Heart left ventricle (tissue), 16 donors: ENCODE measurements at regions of chr22 and their contacts with region 1.

Region 1: DNA sequence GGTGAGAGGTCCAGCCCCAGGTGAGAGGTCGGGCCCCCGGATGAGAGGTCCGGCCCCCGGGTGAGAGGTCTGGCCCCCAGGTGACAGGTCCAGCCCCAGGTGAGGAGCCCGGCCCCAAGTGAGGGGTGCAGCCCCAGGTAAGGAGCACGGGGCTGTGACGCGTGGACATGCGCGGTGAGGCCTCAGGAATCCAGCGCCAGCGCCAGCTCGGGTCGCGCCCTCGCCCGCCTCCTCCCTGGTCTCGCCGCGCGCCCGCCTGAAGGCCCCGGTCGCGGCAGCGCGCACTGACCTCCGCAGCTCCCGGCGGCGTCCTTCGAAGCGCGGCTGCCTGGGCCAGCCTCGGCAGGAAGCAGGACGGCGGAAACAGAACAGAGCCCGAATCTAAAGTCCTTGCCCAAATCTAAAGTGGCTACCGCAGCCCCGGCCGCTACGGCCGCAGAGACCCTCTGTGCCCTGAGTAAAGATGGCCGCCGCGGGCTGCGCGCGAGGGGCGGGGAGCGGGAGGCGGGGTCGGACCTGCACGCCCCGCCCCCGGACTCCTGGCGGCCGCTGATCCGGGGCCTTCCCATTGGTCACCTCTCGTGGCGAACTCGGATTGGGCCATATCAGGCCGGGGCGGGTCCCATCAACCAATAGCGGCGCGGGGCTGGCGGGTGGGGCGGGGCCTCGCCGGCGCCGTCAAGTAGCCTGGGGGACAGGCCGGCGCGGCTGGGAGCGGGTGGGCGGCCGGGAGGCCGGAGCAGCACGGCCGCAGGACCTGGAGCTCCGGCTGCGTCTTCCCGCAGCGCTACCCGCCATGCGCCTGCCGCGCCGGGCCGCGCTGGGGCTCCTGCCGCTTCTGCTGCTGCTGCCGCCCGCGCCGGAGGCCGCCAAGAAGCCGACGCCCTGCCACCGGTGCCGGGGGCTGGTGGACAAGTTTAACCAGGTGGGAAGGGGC is at the starts of genes ALG12 and CRELD2:
- DNase-seq: peak; percentile 99
- ATAC-seq: peak; percentile 97 to 99 (median 98)
- H3K4me3 ChIP-seq: peak within 1 kb of the TSS; percentile 69 to 98 (median 88)
- H3K27ac ChIP-seq: peak within 1 kb of the TSS; percentile 60 to 99 (median 96)
- H3K4me1 ChIP-seq: peaks cover 0 to 24% (median 17%) of the 10 kb centered on the region in 12 donors
- H3K27me3 ChIP-seq: no peaks in the 10 kb centered on the region
- CTCF ChIP-seq: peak in 1 of 12 donors; percentile 12
- POLR2A ChIP-seq: peak; percentile 86 to 88
- total RNA-seq, gene ALG12: 9.8 to 26.8 (median 15.2) TPM
- total RNA-seq, gene CRELD2: 16.7 to 36.2 (median 21.6) TPM

Region 2: DNA sequence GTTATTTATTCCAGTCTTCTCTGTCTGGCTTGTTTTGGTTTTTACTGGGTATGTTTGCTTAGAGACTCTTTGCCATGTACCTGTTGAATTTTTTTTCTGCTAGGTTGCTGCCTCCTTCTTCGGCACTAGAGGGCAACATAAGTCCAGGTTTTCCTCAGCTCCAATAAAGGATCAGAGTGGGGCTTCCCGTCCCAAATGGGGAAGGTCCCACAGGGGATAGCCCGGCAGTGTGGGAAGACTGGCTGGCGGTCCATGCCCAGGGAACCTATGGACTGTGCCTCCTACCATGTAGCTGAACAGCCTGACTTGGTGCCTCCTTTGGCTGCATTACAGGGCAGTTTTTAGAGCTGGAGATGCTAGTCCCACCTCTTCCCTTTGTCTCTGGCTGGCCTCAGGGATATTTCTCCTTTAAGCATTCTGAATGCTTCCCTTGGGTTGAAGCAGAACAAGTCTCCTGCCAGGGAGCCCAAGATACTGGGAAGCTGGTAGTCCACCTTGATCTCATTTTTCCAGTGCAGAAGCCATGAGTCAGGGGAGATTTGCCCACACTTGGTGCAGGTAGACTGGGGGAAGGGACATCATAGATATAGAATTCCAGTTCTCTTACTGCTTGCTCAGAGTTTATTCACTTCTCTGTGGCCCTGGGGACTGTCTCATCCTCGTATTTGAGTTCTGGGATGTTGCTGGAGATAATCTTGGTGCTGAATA is 150.7 kb before region 1 on chr22:
- intact Hi-C with region 1: loop called in 5 of 10 experiments (anchors 5 to 10 kb)
- DNase-seq: peak in 2 of 5 donors; percentile 8 to 38
- ATAC-seq: no peak
- H3K4me3 ChIP-seq: no peak overlapping the region
- H3K27ac ChIP-seq: no peak overlapping the region
- H3K4me1 ChIP-seq: peaks cover 0 to 9% (median 0%) of the 10 kb centered on the region in 12 donors
- H3K27me3 ChIP-seq: no peaks in the 10 kb centered on the region
- CTCF ChIP-seq: peak; percentile 28 to 64 (median 52)
- POLR2A ChIP-seq: no peak

Region 3: DNA sequence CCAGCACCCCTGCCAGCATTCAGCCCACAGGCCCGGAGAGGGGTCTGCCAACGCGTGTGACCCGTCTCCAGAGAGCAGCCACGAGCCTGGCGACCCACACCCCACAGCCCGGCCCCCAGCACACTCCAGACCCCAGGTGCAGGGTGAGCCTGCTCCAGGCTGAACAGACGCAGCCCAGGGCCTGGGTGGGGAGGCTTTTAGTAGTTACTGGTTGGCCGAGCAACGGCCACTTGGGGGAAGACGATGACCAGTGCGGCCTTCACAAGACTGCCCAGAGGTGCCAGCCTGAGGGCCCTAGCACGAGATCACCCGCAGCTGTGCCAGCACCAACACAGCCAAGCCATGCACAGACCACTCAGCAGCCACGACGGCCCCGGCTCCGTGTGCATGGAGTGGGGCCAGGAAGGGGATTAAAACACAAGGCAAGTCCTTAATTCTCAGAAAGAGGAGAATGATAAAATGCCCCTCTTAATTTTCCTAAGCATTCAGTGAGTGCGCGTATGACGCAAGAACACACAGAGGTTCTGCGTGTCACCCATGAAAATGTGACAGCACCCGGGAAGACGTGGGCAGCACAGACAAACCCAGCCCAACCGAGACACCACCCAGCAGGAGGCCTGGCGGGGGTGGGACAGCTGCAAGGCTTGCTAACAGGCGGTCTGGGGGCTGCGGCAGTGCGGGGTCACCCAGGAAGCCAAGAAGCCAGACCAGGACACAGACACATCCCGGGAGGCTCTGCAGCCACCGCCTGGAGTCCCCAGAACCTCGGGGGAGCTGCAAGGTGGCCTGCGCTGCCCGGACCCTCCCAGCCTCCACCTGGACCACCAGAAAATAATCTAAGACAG is 138.2 kb before region 1 on chr22:
- intact Hi-C with region 1: loop called in 4 of 10 experiments (anchors 10 kb)
- DNase-seq: peak in 2 of 5 donors; percentile 37 to 66
- ATAC-seq: peak; percentile 50 to 65 (median 52)
- H3K4me3 ChIP-seq: no peak overlapping the region
- H3K27ac ChIP-seq: no peak overlapping the region
- H3K4me1 ChIP-seq: peaks cover 2 to 28% (median 14%) of the 10 kb centered on the region in 12 donors
- H3K27me3 ChIP-seq: no peaks in the 10 kb centered on the region
- CTCF ChIP-seq: no peak
- POLR2A ChIP-seq: no peak

Region 4: GRCh38 chr22:49789289-49790141 is 128.7 kb before region 1 on chr22:
- intact Hi-C with region 1: loop called in 2 of 10 experiments (anchors 10 kb)
- DNase-seq: peak in 3 of 5 donors; percentile 41 to 70 (median 57)
- ATAC-seq: peak in 3 of 4 donors; percentile 40 to 55 (median 51)
- H3K4me3 ChIP-seq: peak overlapping the region in 8 of 12 donors; percentile 1 to 29 (median 14)
- H3K27ac ChIP-seq: peak overlapping the region; percentile 7 to 86 (median 75)
- H3K4me1 ChIP-seq: peaks cover 12 to 75% (median 67%) of the 10 kb centered on the region in 12 donors
- H3K27me3 ChIP-seq: no peaks in the 10 kb centered on the region
- CTCF ChIP-seq: no peak
- POLR2A ChIP-seq: no peak

Region 5: GRCh38 chr22:49852898-49853894 is 65.0 kb before region 1 on chr22 and contains the start of gene ZBED4:
- intact Hi-C with region 1: loop called in 6 of 10 experiments (anchors 2 to 10 kb)
- DNase-seq: peak; percentile 97 to 100 (median 98)
- ATAC-seq: peak; percentile 94 to 96 (median 96)
- H3K4me3 ChIP-seq: peak within 1 kb of the TSS; percentile 63 to 95 (median 85)
- H3K27ac ChIP-seq: peak within 1 kb of the TSS; percentile 79 to 97 (median 95)
- H3K4me1 ChIP-seq: peaks cover 8 to 48% (median 30%) of the 10 kb centered on the region in 12 donors
- H3K27me3 ChIP-seq: peaks cover 15 to 26% (median 23%) of the 10 kb centered on the region in 9 donors
- CTCF ChIP-seq: no peak
- POLR2A ChIP-seq: peak; percentile 12 to 88
- total RNA-seq, gene ZBED4: 2.9 to 8.6 (median 4.9) TPM

Region 6: GRCh38 chr22:49894322-49895054 is 23.8 kb before region 1 on chr22:
- intact Hi-C with region 1: no loop called
- DNase-seq: no peak
- ATAC-seq: peak in 1 of 4 donors; percentile 6
- H3K4me3 ChIP-seq: no peak overlapping the region
- H3K27ac ChIP-seq: no peak overlapping the region
- H3K4me1 ChIP-seq: peaks cover 0 to 12% (median 2%) of the 10 kb centered on the region in 12 donors
- H3K27me3 ChIP-seq: no peaks in the 10 kb centered on the region
- CTCF ChIP-seq: no peak
- POLR2A ChIP-seq: no peak